SK-N-SH (cell line): ENCODE measurements at regions of chr12 and their contacts with region 1.

Region 1: DNA sequence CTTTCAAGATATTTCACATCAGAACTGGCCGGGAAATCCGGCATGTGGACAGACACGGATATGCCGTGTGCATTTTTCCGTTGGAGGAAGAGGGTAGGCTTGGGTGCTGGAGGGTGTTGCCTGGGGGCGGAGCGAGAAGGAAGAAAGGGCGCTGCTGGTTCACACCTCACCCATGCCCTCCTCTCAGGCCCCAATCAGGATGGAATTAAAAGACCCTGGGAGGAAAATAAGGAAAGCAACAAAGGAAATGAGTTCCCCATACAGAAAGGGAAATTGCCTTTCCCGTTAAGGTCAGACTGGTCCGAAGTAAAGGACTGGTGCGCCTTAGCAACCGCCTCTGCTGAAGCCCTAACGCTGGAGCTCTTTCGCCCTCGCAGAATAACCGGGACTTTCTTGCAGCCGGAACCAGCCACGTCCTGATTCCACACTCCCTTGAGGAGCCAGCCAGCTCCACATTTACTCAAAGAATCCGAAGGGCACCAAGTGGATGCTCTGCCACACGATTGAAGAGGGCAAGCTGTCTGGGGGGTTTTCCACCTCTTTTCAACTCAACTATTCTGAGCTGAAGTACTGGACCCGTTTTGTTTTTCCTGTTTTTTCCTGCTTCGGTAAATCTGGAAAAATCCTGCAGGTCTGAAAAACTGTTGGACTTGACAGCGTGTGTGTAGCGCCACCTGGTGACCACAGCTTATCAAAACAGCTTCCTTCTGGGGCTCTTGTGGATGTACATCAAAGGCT is 37.7 kb upstream of the BCL2L14 start:
- DNase-seq: peak; percentile 68
- H3K4me3 ChIP-seq: peak overlapping the region in 1 of 2 experiments; percentile 31; a peak in 2 of 4 replicates
- H3K27ac ChIP-seq: no peak overlapping the region
- H3K4me1 ChIP-seq: peaks cover 0 to 4% of the 10 kb centered on the region in 2 experiments; a peak in 1 of 4 replicates
- H3K27me3 ChIP-seq: no peaks in the 10 kb centered on the region; the same call in 1 of the 2 replicates
- CTCF ChIP-seq: peak; percentile 87
- EP300 ChIP-seq: no peak
- RAD21 ChIP-seq: peak; percentile 98

Region 2: DNA sequence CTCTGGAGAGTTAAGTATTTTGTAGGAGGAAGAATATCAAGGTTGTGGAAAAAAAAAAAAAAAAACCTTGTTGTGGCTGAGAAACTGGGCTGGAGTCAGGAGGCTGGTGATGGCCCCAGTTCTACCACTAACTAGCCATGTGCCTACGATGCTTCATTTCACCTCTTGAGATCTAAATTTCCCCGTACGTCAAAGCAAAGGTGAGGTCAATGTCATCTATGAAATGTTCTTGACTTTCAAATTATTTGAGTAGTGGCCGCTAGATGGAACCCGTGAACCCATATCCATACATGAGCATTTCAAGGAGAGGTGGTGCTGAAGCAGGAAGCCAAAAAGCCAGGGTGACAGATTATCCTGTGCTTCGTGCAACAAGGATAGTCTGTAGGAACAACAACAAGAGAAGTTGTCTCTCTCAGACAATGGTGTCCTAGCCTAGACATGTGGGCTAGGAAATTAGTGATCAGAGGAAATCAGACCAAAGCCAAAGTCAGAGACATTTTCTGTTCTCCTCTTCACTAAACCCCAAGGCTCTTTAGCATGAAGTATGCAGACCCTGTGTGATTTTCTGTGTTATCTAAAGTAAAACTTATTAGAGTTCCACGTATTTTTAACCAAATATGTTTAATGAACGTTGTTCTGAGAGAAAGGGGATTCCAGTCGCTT is 479.0 kb before region 1 on chr12:
- CTCF ChIA-PET with region 1: interaction called, 33 read pairs
- POLR2A ChIA-PET with region 1: no interaction called
- DNase-seq: peak; percentile 76
- H3K4me3 ChIP-seq: no peak overlapping the region
- H3K27ac ChIP-seq: no peak overlapping the region
- H3K4me1 ChIP-seq: peaks cover 0 to 2% of the 10 kb centered on the region in 2 experiments; a peak in 1 of 4 replicates
- H3K27me3 ChIP-seq: no peaks in the 10 kb centered on the region
- CTCF ChIP-seq: peak; percentile 74
- EP300 ChIP-seq: no peak
- RAD21 ChIP-seq: peak; percentile 73

Region 3: DNA sequence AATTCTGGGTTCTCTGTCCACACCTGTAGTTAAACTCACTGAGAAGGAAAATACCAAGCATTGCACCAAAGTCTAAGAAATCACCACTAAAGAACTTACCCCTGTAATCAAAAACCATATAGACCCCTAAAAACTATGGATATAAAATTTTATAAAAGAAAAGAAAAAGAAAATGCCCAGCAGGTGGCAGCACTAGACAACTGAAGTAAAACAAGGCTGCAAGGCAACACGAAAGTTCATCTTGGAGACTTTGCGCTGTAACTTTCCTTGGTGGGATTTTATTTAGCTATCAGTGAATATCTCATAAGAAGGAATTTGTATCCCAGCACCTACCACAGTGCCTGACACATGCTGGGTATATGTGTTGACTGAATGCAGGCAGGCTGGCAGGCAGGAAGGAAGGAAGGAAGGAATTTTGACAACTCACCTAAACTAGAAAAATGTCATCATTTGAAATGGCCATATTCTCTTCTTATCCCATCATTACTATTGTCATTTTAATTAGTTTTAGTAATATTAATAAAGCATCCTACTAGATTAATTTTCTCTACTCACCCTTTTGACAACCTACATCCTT is 451.8 kb before region 1 on chr12:
- CTCF ChIA-PET with region 1: interaction called, 227 read pairs
- POLR2A ChIA-PET with region 1: no interaction called
- DNase-seq: peak; percentile 51
- H3K4me3 ChIP-seq: no peak overlapping the region; a peak in 1 of 4 replicates
- H3K27ac ChIP-seq: no peak overlapping the region
- H3K4me1 ChIP-seq: peaks cover 0 to 13% of the 10 kb centered on the region in 2 experiments; a peak in 1 of 4 replicates
- H3K27me3 ChIP-seq: no peaks in the 10 kb centered on the region
- CTCF ChIP-seq: peak; percentile 67
- EP300 ChIP-seq: no peak
- RAD21 ChIP-seq: peak; percentile 95

Region 4: GRCh38 chr12:11648831-11649702 is 384.0 kb before region 1 on chr12 and contains the start of gene ETV6:
- CTCF ChIA-PET with region 1: interaction called, 11 read pairs
- POLR2A ChIA-PET with region 1: interaction called, 9 read pairs
- DNase-seq: peak; percentile 85
- H3K4me3 ChIP-seq: peak within 1 kb of the TSS; percentile 88 to 90
- H3K27ac ChIP-seq: peak within 1 kb of the TSS; percentile 100
- H3K4me1 ChIP-seq: peaks cover 13 to 17% of the 10 kb centered on the region in 2 experiments
- H3K27me3 ChIP-seq: no peaks in the 10 kb centered on the region
- CTCF ChIP-seq: no peak
- EP300 ChIP-seq: no peak; a peak in 1 of 4 replicates
- RAD21 ChIP-seq: no peak
- polyA plus RNA-seq, gene ETV6: 4.0 and 5.2 TPM in 2 replicates

Region 5: DNA sequence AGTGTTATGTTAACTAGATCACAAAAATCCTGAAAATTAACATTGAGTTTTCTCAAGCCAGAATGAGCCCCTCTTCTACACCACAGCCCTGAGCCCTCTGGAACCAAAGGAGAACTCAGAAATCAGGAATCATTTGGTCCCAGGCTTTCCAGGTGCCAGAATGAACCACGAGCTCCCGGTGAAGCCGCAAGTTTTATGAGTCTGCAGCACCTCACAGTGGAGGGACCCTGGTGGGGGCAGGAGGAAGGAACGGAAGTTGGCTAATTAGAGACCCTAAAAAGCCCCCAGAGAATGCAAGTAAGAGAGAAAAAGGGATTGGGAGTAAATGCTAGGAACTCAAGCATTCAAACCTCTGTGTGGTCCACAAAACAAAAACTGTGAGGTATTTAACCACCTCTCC is 15.2 kb before region 1 on chr12:
- CTCF ChIA-PET with region 1: interaction called, 18 read pairs
- POLR2A ChIA-PET with region 1: no interaction called
- DNase-seq: no peak
- H3K4me3 ChIP-seq: no peak overlapping the region
- H3K27ac ChIP-seq: peak overlapping the region in 1 of 2 experiments; percentile 88; a peak in 3 of 4 replicates
- H3K4me1 ChIP-seq: peaks cover 5 to 41% of the 10 kb centered on the region in 2 experiments; a peak in 3 of 4 replicates
- H3K27me3 ChIP-seq: no peaks in the 10 kb centered on the region
- CTCF ChIP-seq: peak; percentile 27
- EP300 ChIP-seq: no peak
- RAD21 ChIP-seq: peak; percentile 58